ENCODE measurements at regions of chr5 and their contacts with region 1.

Region 1: GRCh38 chr5:14436801-14437542 is 144.6 kb upstream of the OTULINL start:
- DNase-seq: no peak
- H3K4me3 Mint-ChIP-seq: no peak overlapping the region
- H3K27ac Mint-ChIP-seq: peak overlapping the region; percentile 75
- H3K4me1 Mint-ChIP-seq: peaks cover 30% of the 10 kb centered on the region
- H3K27me3 Mint-ChIP-seq: no peaks in the 10 kb centered on the region

Region 2: GRCh38 chr5:14424011-14424685 is 12.8 kb before region 1 on chr5:
- CTCF ChIA-PET with region 1: interaction called, 4 read pairs
- intact Hi-C with region 1: loop called (anchors 1 kb)
- DNase-seq: peak; percentile 76
- H3K4me3 Mint-ChIP-seq: no peak overlapping the region
- H3K27ac Mint-ChIP-seq: peak overlapping the region; percentile 72
- H3K4me1 Mint-ChIP-seq: peaks cover 17% of the 10 kb centered on the region
- H3K27me3 Mint-ChIP-seq: no peaks in the 10 kb centered on the region

Region 3: GRCh38 chr5:14476786-14477435 is 39.9 kb after region 1 on chr5:
- CTCF ChIA-PET with region 1: no interaction called
- intact Hi-C with region 1: no loop called
- DNase-seq: no peak
- H3K4me3 Mint-ChIP-seq: no peak overlapping the region
- H3K27ac Mint-ChIP-seq: no peak overlapping the region
- H3K4me1 Mint-ChIP-seq: peaks cover 5% of the 10 kb centered on the region
- H3K27me3 Mint-ChIP-seq: no peaks in the 10 kb centered on the region